ENCODE measurements at regions of chr17 and their contacts with region 1.

Region 1: DNA sequence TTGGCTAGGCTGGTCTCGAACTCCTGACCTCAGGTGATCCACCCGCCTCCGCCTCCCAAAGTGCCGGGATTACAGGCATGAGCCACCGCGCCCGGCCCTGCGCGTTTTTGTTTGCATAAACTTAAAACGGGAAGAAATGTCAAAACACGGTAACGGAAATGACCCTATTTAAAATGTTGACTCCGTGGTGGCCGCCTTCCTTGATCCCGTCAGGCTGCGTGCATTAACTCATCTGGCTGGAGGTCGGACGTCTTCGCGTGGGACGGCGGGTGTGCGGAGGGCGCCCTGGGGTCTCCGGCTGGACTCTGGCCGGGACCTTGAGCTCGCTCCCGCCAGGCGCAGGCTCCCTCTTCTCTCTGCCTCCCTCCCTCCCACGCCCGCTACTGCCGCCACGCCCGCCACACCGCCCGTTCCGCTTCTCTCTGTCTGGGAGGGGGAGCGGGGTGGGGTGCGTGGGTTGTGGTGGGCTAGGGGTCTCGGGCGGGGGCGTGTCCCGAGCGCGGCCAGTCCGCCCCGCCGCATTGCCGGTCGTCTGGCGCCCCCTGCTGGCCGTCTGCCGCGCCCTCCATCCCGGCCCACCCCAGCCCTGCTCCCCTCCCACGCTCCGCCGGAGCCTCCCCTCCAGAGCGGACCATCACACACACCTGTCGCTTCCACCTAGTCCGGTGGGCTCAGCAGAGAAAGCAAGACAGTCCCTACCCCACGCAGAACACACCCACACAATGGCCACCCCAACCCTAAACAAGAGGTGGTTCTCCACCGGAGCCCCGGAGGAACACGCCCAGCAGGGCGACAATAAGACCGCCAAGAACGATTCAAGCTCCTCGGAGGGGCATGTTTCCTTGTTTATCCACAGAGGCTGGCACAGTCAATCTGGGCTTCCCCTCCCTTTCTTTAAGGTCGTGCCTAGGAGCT is 1.2 kb upstream of the CCDC42 start:
- DNase-seq: peak; percentile 92
- CTCF ChIP-seq: peak; percentile 79

Region 2: DNA sequence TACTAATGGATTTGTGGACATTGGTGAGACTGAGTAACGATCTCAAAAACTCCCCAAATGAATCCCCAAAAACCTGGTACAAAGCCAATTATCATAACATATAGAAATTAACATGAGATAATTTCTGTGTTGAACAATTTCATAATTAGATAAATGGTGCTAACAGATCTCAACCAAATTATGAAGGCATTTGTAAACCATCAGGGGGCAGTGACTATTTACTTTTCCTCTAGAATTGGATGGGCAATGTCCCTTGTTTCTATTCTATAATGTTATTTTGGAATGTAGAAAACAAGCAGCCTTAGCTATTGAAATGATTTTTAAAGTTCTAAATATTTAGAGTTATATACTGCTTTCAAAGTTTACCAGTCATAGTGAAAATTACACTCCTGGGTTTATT is 173.1 kb before region 1 on chr17:
- CTCF ChIA-PET with region 1: interaction called, 14 read pairs
- POLR2A ChIA-PET with region 1: no interaction called
- DNase-seq: no peak
- CTCF ChIP-seq: peak; percentile 28

Region 3: DNA sequence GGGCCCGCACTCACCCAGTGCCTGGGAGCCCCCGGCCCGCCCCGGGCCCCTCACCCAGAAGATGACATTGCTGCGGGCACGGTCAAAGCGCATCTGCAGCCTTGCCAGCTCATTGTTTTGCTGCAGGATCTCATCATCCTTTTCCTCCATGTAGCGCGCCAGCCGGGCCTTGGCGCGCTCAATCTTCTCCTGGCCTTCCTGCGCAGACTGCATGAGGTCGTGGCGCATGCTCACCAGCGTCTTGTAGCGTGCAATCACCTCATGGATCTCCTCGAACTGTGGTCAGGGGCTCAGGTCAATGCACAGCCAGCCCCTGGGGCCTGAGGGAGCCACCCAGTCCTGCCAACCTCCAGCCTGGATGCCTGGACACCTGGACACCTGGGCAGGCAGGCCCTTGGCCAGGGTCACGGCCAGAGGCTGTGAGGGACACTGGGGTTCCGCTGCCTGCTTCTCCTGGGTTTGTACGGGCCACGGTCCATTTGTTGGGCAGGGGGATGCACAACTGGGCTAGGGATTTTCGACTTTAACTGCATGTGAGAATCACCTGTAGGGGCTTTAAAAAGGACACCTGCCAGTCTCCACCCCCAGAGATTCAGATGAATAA is 10.4 kb before region 1 on chr17:
- CTCF ChIA-PET with region 1: interaction called, 12 read pairs
- POLR2A ChIA-PET with region 1: no interaction called
- DNase-seq: no peak
- CTCF ChIP-seq: no peak

Region 4: GRCh38 chr17:8766731-8767130 is 20.9 kb after region 1 on chr17:
- CTCF ChIA-PET with region 1: no interaction called
- POLR2A ChIA-PET with region 1: no interaction called
- DNase-seq: no peak
- CTCF ChIP-seq: no peak